Esophagus squamous epithelium (tissue), 5 donors: ENCODE measurements at regions of chr2 and their contacts with region 1.

Region 1: DNA sequence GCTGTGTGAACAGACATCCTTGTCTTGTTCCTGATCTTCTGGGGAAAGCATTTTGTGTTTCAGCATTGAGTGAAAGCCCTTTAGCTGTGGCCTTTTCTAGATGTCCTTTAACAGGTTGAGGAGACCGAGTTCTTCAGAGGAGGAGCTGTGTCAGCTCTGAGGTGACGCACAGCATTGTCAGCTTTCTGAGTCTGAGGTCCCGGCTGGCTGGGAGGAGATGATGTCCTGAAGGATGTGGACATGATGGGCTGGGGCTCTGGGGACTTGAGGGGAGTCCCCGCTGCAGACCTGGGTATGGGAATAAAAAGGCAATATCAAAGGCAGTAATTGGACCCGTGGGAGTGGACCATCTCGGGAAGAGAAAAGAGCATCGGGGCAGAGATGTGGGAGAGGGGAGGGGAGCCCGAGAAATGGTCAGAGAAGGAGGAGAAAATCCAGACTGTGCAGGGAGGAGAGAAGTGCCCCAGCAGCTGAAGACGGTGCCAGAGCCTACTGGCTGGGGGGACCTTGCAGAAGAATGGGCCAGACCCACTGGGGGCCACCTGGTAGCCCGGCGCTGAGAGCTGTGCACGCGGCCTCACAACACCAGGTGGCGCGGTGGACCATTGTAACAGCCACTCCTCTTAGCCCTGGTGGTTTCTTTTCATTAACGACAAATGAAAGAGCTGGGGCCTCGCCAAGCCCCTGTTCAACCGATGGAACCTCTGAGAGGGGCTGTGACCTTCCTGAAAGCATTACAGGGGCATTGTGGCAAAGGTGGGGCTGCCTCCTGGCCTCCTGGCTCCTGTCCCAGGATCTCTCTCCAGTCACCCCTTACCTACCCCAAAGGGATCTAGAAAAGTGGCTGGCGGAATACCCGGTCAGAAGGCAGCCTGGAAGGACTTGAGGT is 61.6 kb downstream of the ST3GAL5 start:
- DNase-seq: peak; percentile 23
- H3K4me3 ChIP-seq: peak overlapping the region in 2 of 4 donors; percentile 11 to 44
- H3K27ac ChIP-seq: no peak overlapping the region
- H3K4me1 ChIP-seq: peaks cover 0 to 8% (median 8%) of the 10 kb centered on the region in 3 donors
- H3K27me3 ChIP-seq: peaks cover 0 to 5% (median 0%) of the 10 kb centered on the region in 4 donors
- CTCF ChIP-seq: peak; percentile 85 to 91 (median 90)
- POLR2A ChIP-seq: no peak

Region 2: DNA sequence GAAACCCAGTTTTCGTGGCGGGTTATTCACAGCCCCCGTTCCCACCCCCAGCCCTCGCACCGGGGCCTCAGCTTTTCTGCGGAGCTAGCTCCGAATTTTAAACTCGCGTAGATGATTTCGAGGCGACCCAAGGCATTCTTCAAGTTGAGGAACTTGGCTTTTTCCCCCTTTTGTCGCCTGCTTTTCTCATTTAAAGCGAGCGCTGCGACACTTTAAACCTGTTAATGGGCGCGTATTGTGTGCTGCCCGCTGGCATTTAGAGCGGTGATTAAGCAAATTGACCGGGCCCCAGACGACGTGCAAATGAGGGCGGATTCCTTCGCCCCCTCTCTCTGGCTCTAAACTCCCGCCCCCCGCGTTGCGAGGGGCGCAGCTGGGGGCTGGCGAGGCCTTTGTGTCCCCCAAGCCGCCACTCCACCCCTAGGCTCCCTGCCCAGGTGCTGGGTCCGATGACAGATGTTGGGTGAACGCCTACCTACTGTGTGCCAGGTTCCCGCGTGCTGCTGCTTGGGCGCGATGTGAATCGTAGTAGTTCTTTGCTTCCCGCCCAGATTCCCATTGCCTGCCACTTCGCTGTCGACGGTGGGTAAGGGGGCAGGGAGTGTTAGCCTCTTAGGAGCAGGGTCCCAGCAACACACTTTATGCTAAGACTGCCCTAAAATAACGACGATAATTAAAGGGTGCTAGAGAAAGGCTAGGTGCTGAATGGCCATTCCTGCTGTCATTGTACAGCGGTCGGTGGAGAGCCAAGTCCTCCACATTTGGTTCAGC is 692.2 kb before region 1 on chr2:
- intact Hi-C with region 1: no loop called
- DNase-seq: no peak
- H3K4me3 ChIP-seq: peak overlapping the region in 3 of 4 donors; percentile 67 to 88 (median 72)
- H3K27ac ChIP-seq: peak overlapping the region in 3 of 4 donors; percentile 81 to 91 (median 89)
- H3K4me1 ChIP-seq: peaks cover 12 to 57% (median 32%) of the 10 kb centered on the region in 3 donors
- H3K27me3 ChIP-seq: peaks cover 0 to 26% (median 0%) of the 10 kb centered on the region in 4 donors
- CTCF ChIP-seq: no peak
- POLR2A ChIP-seq: no peak

Region 3: DNA sequence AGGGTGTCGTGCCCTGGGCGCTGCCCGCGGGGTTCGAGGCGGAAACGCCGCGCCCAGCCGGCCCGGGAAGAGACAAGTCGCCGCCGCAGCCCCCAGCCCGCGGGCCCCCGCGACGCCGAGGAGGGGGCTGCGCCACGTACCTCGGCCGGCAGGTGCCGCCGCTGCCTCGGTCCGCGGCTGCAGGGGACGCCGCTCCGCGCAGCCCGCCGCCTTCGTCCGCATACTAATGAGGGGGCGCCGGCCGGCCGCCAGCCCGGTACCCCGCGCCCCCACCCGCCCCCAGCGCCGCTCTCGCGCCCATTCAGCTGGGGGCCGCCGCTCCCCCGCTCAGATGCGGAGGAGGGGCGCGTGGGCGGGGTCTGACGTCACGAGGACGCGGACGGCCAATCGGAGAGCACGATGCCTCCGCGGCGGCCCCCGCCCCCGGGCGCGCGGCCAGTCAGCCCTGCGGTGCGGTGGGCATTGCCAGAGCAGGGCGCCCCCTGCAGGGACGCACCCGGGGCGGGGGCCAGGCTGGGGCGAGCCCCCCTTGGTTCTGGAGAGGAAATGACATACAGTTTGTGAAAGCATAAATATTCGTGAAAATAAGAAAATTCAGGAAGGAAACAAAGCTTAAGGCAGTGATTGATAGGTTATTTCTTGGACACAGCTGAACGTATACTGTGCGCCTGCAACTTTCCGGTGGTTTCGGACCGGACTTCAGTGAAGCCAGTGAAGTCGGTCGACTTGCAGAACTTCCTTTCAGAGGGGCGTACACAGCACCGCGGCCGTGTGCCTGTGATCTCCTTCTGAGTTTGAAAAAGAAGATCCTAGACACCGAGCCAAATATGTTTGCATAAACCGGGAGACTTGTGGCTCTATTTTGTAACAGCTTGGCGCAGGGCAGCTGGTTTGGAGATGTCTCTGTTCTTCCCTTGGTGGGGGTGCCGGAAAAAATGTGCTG is 61.7 kb after region 1 on chr2 and contains the start of gene ST3GAL5:
- intact Hi-C with region 1: loop called (anchors 10 kb)
- DNase-seq: peak; percentile 56
- H3K4me3 ChIP-seq: peak within 1 kb of the TSS; percentile 51 to 89 (median 71)
- H3K27ac ChIP-seq: peak within 1 kb of the TSS; percentile 77 to 93 (median 86)
- H3K4me1 ChIP-seq: peaks cover 19 to 76% (median 33%) of the 10 kb centered on the region in 3 donors
- H3K27me3 ChIP-seq: peaks cover 0 to 15% (median 0%) of the 10 kb centered on the region in 4 donors
- CTCF ChIP-seq: peak in 5 of 6 experiments; percentile 49 to 58 (median 53)
- POLR2A ChIP-seq: peak in 2 of 4 donors; percentile 45 to 54
- total RNA-seq, gene ST3GAL5: 1.3 to 13.5 (median 5.2) TPM

Region 4: DNA sequence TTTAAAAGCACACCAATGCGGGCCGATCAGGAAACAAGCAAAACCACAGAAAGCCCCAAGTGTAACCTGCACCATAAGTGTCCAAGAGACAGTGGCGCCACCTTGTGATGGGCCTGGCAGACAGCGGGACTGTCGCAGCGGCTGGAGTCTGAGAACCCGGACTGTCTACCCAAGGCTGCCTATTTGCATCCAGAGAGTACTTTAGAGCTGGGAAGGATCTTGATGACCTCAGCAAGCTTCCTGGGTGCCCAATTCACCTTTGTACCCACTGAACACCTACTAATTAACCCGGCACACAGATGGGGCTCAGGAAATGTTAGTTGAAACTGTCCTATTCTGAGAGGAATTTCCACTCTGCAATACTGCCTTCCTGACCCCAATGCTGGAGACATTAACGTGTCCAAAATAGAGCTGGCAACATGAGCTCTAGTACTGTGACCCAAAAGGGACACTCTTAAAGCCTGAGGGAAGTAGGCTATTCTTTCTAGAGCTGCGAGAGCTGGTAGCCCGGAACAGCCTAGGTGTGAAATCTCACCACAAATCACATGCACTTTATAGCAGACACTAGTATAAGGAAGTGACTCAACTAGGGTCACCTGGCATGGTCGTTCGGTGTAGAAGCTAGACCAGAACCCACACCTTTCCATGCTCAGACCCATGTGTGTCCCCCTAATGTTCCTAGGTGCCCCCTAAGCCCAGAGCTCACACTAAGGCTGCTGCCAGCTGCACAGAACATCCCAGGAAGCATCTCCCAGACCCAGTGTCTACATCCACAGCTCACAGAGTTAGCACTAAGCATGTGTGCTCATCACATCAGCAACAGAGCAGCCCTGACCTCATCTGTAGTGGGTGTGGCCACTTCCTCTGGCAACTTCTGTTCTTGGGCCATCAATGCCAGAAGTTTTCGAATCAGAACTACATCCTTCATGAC is 253.0 kb after region 1 on chr2:
- intact Hi-C with region 1: loop called (anchors 5 kb)
- DNase-seq: peak; percentile 21
- H3K4me3 ChIP-seq: no peak overlapping the region
- H3K27ac ChIP-seq: peak overlapping the region in 1 of 4 donors; percentile 26
- H3K4me1 ChIP-seq: peaks cover 0 to 15% (median 0%) of the 10 kb centered on the region in 3 donors
- H3K27me3 ChIP-seq: no peaks in the 10 kb centered on the region
- CTCF ChIP-seq: peak; percentile 64 to 83 (median 78)
- POLR2A ChIP-seq: no peak